ENCODE measurements at regions of chr4 and their contacts with region 1.

Region 1: GRCh38 chr4:56424697-56425514 is 10.5 kb downstream of the PPAT start:
- DNase-seq: no peak
- H3K4me3 ChIP-seq: no peak overlapping the region
- H3K27ac ChIP-seq: no peak overlapping the region
- H3K4me1 ChIP-seq: no peaks in the 10 kb centered on the region
- H3K27me3 ChIP-seq: no peaks in the 10 kb centered on the region
- CTCF ChIP-seq: peak; percentile 56 to 68 (median 62)
- EP300 ChIP-seq: no peak
- POLR2A ChIP-seq: no peak

Region 2: GRCh38 chr4:56544573-56545131 is 119.7 kb after region 1 on chr4:
- intact Hi-C with region 1: loop called (anchors 5 kb)
- DNase-seq: peak; percentile 94
- H3K4me3 ChIP-seq: peak overlapping the region; percentile 39 to 57 (median 44)
- H3K27ac ChIP-seq: no peak overlapping the region
- H3K4me1 ChIP-seq: peaks cover 4 to 12% (median 10%) of the 10 kb centered on the region in 4 donors
- H3K27me3 ChIP-seq: no peaks in the 10 kb centered on the region
- CTCF ChIP-seq: peak; percentile 89 to 98 (median 98)
- EP300 ChIP-seq: no peak
- POLR2A ChIP-seq: no peak

Region 3: GRCh38 chr4:56668298-56668697 is 243.4 kb after region 1 on chr4:
- intact Hi-C with region 1: no loop called
- DNase-seq: no peak
- H3K4me3 ChIP-seq: no peak overlapping the region
- H3K27ac ChIP-seq: no peak overlapping the region
- H3K4me1 ChIP-seq: no peaks in the 10 kb centered on the region
- H3K27me3 ChIP-seq: peaks cover 0 to 5% (median 0%) of the 10 kb centered on the region in 4 donors
- CTCF ChIP-seq: peak in 2 of 3 experiments; percentile 4 to 36
- EP300 ChIP-seq: no peak
- POLR2A ChIP-seq: no peak

Region 4: GRCh38 chr4:56840559-56840958 is 415.7 kb after region 1 on chr4:
- intact Hi-C with region 1: loop called (anchors 2 kb)
- DNase-seq: no peak
- H3K4me3 ChIP-seq: no peak overlapping the region
- H3K27ac ChIP-seq: no peak overlapping the region
- H3K4me1 ChIP-seq: no peaks in the 10 kb centered on the region
- H3K27me3 ChIP-seq: no peaks in the 10 kb centered on the region
- CTCF ChIP-seq: no peak
- EP300 ChIP-seq: no peak
- POLR2A ChIP-seq: no peak